ENCODE measurements at regions of chr7 and their contacts with region 1.

Region 1: GRCh38 chr7:100407285-100408180 is 21.0 kb downstream of the ZCWPW1 start:
- DNase-seq: peak; percentile 57 to 61
- H3K4me3 ChIP-seq: no peak overlapping the region
- H3K4me1 ChIP-seq: no peaks in the 10 kb centered on the region
- H3K27me3 ChIP-seq: peaks cover 19% of the 10 kb centered on the region; the same call in 1 of the 2 replicates

Region 2: DNA sequence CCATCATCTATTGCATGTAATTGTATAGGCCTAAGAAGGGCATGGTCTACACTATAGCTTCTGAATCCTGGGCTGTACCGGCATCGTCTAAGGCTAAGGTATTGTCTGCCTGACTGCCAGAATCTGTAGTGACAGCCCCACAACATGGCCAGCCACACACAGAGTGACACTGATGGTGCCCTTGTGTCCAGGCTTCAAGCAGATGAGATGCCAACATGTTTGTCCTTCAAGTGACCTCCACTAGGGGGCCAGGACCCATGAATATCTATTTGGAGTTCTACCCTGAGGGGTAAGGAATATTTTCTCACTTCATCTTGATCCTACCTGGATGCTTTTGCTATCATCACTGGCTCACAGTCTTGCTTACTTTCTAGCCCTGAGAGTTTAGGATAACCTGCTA is 674.1 kb before region 1 on chr7:
- in situ Hi-C with region 1: no loop called
- DNase-seq: peak; percentile 6 to 31
- H3K4me3 ChIP-seq: no peak overlapping the region
- H3K4me1 ChIP-seq: no peaks in the 10 kb centered on the region
- H3K27me3 ChIP-seq: no peaks in the 10 kb centered on the region

Region 3: DNA sequence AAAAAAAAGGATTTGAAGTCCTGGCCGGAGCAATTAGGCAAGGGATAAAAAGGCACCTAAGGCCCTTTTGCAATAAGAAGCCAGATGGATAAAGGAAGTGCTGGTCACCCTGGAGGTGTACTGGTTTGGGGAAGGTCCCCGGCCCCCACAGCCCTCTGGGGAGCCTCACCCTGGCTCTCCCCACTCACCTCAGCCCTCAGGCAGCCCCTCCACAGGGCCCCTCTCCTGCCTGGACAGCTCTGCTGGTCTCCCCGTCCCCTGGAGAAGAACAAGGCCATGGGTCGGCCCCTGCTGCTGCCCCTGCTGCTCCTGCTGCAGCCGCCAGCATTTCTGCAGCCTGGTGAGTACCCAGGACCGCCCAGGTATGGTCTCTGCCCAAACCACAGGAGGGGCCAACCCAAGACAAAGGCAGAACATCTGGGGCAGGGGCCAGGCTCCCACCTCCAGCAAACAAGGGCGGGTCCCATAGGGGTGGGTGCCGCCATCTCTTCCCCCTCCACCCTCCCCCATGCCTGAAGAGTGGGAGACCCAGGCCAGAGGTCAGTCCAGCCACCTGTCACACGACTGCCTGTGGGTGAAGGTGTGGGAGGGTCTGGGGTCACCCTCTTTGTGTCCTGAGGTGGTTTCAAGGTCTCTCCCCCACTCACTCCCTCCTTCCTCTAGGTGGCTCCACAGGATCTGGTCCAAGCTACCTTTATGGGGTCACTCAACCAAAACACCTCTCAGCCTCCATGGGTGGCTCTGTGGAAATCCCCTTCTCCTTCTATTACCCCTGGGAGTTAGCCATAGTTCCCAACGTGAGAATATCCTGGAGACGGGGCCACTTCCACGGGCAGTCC is 49.3 kb before region 1 on chr7 and contains the start of gene PILRB:
- in situ Hi-C with region 1: loop called (anchors 5 kb)
- DNase-seq: no peak
- H3K4me3 ChIP-seq: no peak within 1 kb of the TSS
- H3K4me1 ChIP-seq: no peaks in the 10 kb centered on the region
- H3K27me3 ChIP-seq: no peaks in the 10 kb centered on the region

Region 4: DNA sequence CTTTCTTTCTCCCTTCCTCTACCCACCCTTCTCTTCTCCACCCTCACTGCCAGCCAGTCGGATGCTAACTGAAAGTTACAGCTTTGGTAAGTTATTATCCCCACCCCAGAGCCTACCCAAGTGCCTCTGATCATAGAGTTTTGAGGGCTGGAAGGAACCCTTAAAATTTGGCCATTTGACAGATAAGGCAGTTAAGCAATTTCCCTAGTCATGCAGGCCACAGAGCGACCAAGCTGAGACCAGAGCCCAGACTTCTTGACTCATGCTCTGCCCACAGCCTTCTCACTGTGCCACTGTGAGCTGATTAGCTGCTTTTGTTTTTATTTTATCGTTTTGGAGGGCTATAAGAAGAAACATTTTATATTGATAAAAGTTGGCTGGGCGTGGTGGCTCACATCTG is 149.0 kb after region 1 on chr7:
- in situ Hi-C with region 1: no loop called
- DNase-seq: no peak
- H3K4me3 ChIP-seq: no peak overlapping the region
- H3K4me1 ChIP-seq: no peaks in the 10 kb centered on the region
- H3K27me3 ChIP-seq: no peaks in the 10 kb centered on the region

Measured in HAP-1 (cell line).